HEK293 (cell line): ENCODE measurements at regions of chr19 and their contacts with region 1.

Region 1: DNA sequence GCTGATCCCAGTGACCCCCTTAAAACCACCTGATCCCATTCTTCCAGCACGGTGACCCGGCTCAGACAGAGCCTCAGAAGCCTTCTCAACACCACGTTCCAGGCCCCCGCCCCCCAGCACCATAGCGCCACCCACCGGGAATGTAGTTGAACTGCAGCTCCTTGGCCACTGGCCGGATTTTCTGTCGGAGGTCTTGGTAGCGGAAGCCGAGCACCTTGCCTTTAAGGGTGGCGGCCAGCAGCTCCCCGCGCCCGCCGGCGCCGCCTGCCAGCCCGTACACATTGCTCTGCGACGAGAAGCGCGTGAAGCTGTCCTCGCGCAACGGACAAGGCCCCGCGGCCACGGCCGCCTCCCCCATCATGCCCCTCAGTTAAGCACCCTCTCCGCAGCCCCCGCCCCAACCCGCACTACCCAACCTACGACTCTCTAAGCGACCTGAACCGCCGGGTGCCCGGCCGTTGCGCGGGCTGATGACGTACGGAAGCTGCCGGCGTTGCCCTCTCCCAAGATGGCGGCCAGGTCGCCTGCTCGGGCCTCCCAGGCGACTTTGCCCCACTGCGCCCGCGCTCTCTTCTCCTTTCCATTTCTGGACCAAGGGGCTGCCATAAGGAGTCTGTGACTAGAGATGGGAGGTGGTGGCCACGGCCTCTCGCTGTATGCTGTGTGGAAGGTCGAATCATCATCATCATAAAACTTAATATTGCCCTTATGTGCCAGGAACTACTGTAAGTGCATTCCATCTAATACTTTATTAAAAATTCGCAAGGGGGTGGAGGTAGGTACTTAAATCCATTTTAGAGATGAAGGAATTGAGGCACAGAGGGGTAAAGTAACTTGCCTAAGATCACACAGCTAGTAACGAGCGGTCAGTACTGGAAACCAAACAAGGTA is at the start of gene KPTN:
- H3K4me3 ChIP-seq: peak within 1 kb of the TSS; percentile 85
- H3K27ac ChIP-seq: peak within 1 kb of the TSS; percentile 79
- H3K4me1 ChIP-seq: no peaks in the 10 kb centered on the region
- CTCF ChIP-seq: peak; percentile 99

Region 2: DNA sequence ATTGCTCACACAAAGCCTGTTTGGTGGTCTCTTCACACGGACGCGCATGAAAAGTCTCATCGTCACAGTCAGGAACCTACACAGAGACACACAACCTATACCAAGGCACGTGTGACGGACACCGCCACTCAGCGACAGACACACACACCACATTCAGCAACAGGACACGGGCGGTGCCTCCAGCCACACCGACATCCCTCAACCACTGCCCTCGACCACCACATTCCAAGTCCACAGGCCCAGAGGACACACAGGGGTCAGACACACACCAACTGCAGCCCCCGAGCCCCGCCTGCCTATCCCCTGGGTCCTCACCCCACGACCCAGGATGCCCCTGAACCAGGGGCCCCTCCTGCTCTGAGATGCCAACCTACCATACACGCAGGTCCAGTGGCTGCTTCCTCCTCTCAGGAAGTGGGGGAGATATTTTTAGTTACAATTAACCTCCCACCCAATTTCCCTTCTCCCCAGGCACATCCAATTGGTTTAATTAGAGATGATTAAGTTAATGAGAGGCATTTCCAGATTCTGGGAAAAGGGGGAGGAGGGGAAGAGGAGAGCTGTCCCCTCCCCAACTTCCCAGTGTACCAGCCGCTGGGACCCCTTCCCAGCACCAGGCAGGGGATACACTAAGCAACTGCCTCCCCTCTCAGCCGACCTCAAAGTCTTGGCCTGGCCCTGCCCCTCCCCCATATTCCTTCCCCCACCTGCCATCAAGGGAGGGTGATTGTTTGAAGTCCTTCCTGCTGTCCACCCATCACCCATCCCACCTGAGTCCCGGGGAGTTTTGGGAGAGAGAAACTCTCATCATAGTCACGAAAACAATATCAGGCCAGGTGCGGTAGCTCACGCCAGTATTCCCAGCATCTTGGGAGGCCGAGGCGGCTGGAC is 85.1 kb before region 1 on chr19:
- CTCF ChIA-PET with region 1: no interaction called
- POLR2A ChIA-PET with region 1: no interaction called
- H3K4me3 ChIP-seq: no peak overlapping the region
- H3K27ac ChIP-seq: no peak overlapping the region
- H3K4me1 ChIP-seq: no peaks in the 10 kb centered on the region
- CTCF ChIP-seq: no peak

Region 3: GRCh38 chr19:47414469-47414868 is 69.6 kb before region 1 on chr19:
- CTCF ChIA-PET with region 1: no interaction called
- POLR2A ChIA-PET with region 1: no interaction called
- H3K4me3 ChIP-seq: no peak overlapping the region
- H3K27ac ChIP-seq: no peak overlapping the region
- H3K4me1 ChIP-seq: no peaks in the 10 kb centered on the region
- CTCF ChIP-seq: peak; percentile 81

Region 4: GRCh38 chr19:47471733-47472457 is 12.2 kb before region 1 on chr19 and contains the start of gene SLC8A2:
- CTCF ChIA-PET with region 1: interaction called, 6 read pairs
- POLR2A ChIA-PET with region 1: interaction called, 10 read pairs
- H3K4me3 ChIP-seq: peak within 1 kb of the TSS; percentile 6; the same call in 1 of the 2 replicates
- H3K27ac ChIP-seq: no peak within 1 kb of the TSS
- H3K4me1 ChIP-seq: no peaks in the 10 kb centered on the region
- CTCF ChIP-seq: no peak

Region 5: DNA sequence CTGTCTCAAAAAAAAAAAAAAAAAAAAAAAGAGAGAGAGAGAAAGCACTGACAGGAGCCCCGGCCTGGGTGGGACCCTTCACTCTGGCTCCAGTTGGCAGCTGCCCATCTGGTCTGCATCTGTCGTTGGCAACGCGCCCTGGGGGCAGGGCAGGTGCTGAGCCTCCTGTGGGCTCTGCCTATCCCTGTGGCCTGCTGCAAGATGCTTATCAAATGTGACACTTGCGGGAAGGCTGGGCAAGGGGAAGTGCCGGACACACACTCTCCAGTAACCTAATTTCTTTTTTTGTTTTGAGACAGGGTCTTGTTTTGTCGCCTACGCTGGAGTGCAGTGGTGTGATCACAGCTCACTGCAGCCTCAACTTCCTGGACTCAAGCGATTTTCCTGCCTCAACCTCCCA is 10.7 kb after region 1 on chr19:
- CTCF ChIA-PET with region 1: interaction called, 7 read pairs
- POLR2A ChIA-PET with region 1: interaction called, 10 read pairs
- H3K4me3 ChIP-seq: no peak overlapping the region
- H3K27ac ChIP-seq: no peak overlapping the region
- H3K4me1 ChIP-seq: no peaks in the 10 kb centered on the region
- CTCF ChIP-seq: no peak

Region 6: DNA sequence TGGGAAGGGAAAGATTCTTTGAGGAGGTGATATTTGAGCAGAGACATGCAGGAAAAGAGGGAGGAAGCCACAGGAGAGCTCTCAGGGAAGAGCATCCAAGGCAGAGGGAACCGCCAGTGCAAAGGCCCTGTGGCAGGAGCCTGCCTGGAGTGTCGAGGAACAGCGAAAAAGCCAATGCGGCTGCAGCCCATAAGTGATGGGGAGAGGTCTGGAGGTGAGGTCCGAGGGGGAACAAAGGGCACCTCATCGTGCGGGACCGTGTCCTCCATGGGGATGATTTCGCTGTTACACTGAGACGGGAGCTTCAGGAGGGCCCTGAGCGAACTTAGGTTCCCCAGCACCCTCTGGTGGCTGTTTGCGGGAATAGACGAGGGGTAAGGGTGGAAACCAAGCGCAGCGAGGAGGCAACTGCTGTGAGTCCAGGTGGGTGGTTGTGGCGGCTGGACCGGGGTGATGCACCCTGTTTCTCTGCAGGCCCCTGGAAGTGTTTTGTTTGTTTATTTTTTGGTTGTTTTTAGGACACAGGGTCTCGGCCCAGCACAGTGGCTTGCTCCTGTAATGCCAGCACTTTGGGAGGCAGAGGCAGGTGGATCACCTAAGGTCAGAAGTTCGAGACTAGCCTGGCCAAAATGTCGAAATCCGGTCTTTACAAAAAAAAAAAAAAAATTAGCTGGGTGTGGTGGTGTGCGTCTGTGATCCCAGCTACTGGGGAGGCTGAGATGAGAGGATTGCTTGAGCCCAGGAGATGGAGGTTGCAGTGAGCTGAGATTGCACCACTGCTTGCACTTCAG is 223.3 kb after region 1 on chr19:
- CTCF ChIA-PET with region 1: interaction called, 15 read pairs
- POLR2A ChIA-PET with region 1: interaction called, 3 read pairs
- H3K4me3 ChIP-seq: no peak overlapping the region
- H3K27ac ChIP-seq: no peak overlapping the region
- H3K4me1 ChIP-seq: no peaks in the 10 kb centered on the region
- CTCF ChIP-seq: peak; percentile 84